CD4-positive, alpha-beta memory T cell (primary cell): ENCODE measurements at regions of chr2 and their contacts with region 1.

Region 1: GRCh38 chr2:151808258-151809072 is 19.8 kb downstream of the ARL5A start:
- DNase-seq: peak in 4 of 5 donors; percentile 31 to 44 (median 41)
- H3K4me3 ChIP-seq: peak overlapping the region in 1 of 2 donors; percentile 12
- H3K4me3 Mint-ChIP-seq: peak overlapping the region in 4 of 8 donors; percentile 10 to 62 (median 32)
- H3K27ac ChIP-seq: no peak overlapping the region
- H3K27ac Mint-ChIP-seq: peak overlapping the region in 5 of 7 donors; percentile 10 to 59 (median 38)
- H3K4me1 ChIP-seq: peaks cover 14% of the 10 kb centered on the region
- H3K4me1 Mint-ChIP-seq: peaks cover 0 to 7% (median 4%) of the 10 kb centered on the region in 4 donors
- H3K27me3 ChIP-seq: no peaks in the 10 kb centered on the region
- H3K27me3 Mint-ChIP-seq: no peaks in the 10 kb centered on the region

Region 2: GRCh38 chr2:151619337-151619989 is 189.0 kb before region 1 on chr2:
- CTCF ChIA-PET with region 1: interaction called, 3 read pairs
- POLR2A ChIA-PET with region 1: no interaction called
- intact Hi-C with region 1: loop called (anchors 10 kb)
- DNase-seq: no peak
- H3K4me3 ChIP-seq: no peak overlapping the region
- H3K4me3 Mint-ChIP-seq: no peak overlapping the region
- H3K27ac ChIP-seq: no peak overlapping the region
- H3K27ac Mint-ChIP-seq: no peak overlapping the region
- H3K4me1 ChIP-seq: peaks cover 10% of the 10 kb centered on the region
- H3K4me1 Mint-ChIP-seq: peaks cover 8 to 10% (median 9%) of the 10 kb centered on the region in 4 donors
- H3K27me3 ChIP-seq: no peaks in the 10 kb centered on the region
- H3K27me3 Mint-ChIP-seq: no peaks in the 10 kb centered on the region

Region 3: GRCh38 chr2:151638191-151638933 is 170.1 kb before region 1 on chr2:
- CTCF ChIA-PET with region 1: no interaction called
- POLR2A ChIA-PET with region 1: no interaction called
- intact Hi-C with region 1: loop called (anchors 5 kb)
- DNase-seq: peak; percentile 43 to 59 (median 56)
- H3K4me3 ChIP-seq: peak overlapping the region in 1 of 2 donors; percentile 20
- H3K4me3 Mint-ChIP-seq: peak overlapping the region; percentile 64 to 90 (median 80)
- H3K27ac ChIP-seq: peak overlapping the region; percentile 51
- H3K27ac Mint-ChIP-seq: peak overlapping the region; percentile 72 to 96 (median 88)
- H3K4me1 ChIP-seq: peaks cover 46% of the 10 kb centered on the region
- H3K4me1 Mint-ChIP-seq: peaks cover 33 to 58% (median 39%) of the 10 kb centered on the region in 4 donors
- H3K27me3 ChIP-seq: no peaks in the 10 kb centered on the region
- H3K27me3 Mint-ChIP-seq: no peaks in the 10 kb centered on the region

Region 4: GRCh38 chr2:151792589-151792988 is 15.9 kb before region 1 on chr2:
- CTCF ChIA-PET with region 1: no interaction called
- POLR2A ChIA-PET with region 1: no interaction called
- intact Hi-C with region 1: no loop called
- DNase-seq: no peak
- H3K4me3 ChIP-seq: no peak overlapping the region
- H3K4me3 Mint-ChIP-seq: no peak overlapping the region
- H3K27ac ChIP-seq: no peak overlapping the region
- H3K27ac Mint-ChIP-seq: no peak overlapping the region
- H3K4me1 ChIP-seq: no peaks in the 10 kb centered on the region
- H3K4me1 Mint-ChIP-seq: peaks cover 0 to 3% (median 1%) of the 10 kb centered on the region in 4 donors
- H3K27me3 ChIP-seq: no peaks in the 10 kb centered on the region
- H3K27me3 Mint-ChIP-seq: no peaks in the 10 kb centered on the region

Region 5: GRCh38 chr2:151869291-151869690 is 60.8 kb after region 1 on chr2:
- CTCF ChIA-PET with region 1: no interaction called
- POLR2A ChIA-PET with region 1: no interaction called
- intact Hi-C with region 1: no loop called
- DNase-seq: no peak
- H3K4me3 ChIP-seq: no peak overlapping the region
- H3K4me3 Mint-ChIP-seq: no peak overlapping the region
- H3K27ac ChIP-seq: no peak overlapping the region
- H3K27ac Mint-ChIP-seq: no peak overlapping the region
- H3K4me1 ChIP-seq: no peaks in the 10 kb centered on the region
- H3K4me1 Mint-ChIP-seq: no peaks in the 10 kb centered on the region
- H3K27me3 ChIP-seq: no peaks in the 10 kb centered on the region
- H3K27me3 Mint-ChIP-seq: peaks cover 11 to 16% of the 10 kb centered on the region in 2 donors